SK-N-SH (cell line): ENCODE measurements at regions of chr1 and their contacts with region 1.

Region 1: GRCh38 chr1:224513787-224514209 is 79.2 kb upstream of the WDR26 start:
- DNase-seq: peak; percentile 89
- H3K4me3 ChIP-seq: peak overlapping the region in 1 of 2 experiments; percentile 27; a peak in 1 of 4 replicates
- H3K27ac ChIP-seq: no peak overlapping the region
- H3K4me1 ChIP-seq: peaks cover 0 to 3% of the 10 kb centered on the region in 2 experiments; a peak in 2 of 4 replicates
- H3K27me3 ChIP-seq: no peaks in the 10 kb centered on the region
- CTCF ChIP-seq: peak; percentile 92
- EP300 ChIP-seq: no peak
- RAD21 ChIP-seq: peak; percentile 97

Region 2: DNA sequence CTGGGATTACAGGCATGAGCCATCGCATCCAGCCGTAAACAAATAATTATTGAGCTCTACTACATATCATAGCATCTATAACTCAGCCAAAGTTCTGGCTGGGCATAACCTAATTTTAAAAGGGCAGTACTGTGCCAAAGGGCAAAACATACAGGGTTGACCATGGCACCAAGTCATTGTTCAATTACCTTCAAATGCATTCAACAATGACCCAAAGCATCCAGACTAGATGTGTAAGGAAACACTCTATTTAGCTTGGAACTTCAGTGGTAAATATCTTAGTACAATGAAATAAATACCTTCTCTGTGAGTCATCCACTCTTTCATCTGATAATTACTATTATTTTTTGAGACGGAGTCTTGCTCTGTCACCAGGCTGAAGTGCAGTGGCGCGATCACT is 253.9 kb before region 1 on chr1:
- CTCF ChIA-PET with region 1: no interaction called
- POLR2A ChIA-PET with region 1: no interaction called
- DNase-seq: no peak
- H3K4me3 ChIP-seq: no peak overlapping the region
- H3K27ac ChIP-seq: no peak overlapping the region
- H3K4me1 ChIP-seq: no peaks in the 10 kb centered on the region
- H3K27me3 ChIP-seq: no peaks in the 10 kb centered on the region
- CTCF ChIP-seq: no peak
- EP300 ChIP-seq: no peak
- RAD21 ChIP-seq: no peak

Region 3: DNA sequence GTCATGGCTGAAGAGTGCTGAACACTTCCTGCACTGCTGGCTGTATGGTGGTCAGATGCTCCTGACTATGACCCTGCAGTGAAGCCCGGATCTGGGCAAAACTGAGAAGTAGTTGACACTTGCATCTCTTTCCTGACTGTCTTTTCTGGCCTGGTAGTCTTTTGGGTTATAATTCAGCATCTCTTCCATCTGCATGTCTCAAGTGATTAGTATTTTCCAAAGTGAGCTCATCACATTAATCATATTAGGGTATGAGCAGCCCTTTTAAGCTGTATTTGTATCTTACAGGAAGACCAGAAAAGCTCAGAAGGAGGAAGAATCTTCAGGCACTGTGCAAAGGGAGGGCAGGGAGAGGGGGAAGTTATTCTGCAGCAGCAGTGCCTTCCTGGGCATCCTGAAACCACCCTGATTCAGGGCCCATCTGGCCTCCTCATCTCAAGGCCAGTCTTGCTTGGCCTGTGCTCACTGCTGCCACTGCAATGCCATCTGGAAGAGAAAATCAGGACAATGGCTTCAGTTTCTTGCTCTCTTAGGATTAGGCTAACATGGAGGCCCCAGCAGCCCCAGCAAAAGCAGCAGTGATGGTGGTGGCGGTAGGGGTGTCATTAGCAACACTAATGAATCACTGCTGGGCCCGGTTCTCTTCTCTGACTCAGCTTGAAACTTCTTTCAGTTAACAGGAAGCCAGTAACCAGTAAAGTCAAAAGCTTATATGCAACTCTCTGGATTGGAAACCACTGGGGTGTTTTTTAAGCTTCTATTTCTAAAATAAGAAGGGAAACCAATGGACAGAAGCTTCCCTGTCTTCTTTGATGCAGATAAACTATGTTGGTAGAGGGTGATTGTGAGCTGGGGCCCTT is 15.9 kb before region 1 on chr1:
- CTCF ChIA-PET with region 1: interaction called, 33 read pairs
- POLR2A ChIA-PET with region 1: interaction called, 3 read pairs
- DNase-seq: no peak
- H3K4me3 ChIP-seq: peak overlapping the region in 1 of 2 experiments; percentile 0; a peak in 1 of 4 replicates
- H3K27ac ChIP-seq: peak overlapping the region; percentile 81 to 93
- H3K4me1 ChIP-seq: peaks cover 35 to 39% of the 10 kb centered on the region in 2 experiments
- H3K27me3 ChIP-seq: no peaks in the 10 kb centered on the region
- CTCF ChIP-seq: no peak
- EP300 ChIP-seq: 0 out of 4 replicates have a peak, but pooled peaks of 1 of the 2 experiments have one; percentile 39
- RAD21 ChIP-seq: no peak

Region 4: DNA sequence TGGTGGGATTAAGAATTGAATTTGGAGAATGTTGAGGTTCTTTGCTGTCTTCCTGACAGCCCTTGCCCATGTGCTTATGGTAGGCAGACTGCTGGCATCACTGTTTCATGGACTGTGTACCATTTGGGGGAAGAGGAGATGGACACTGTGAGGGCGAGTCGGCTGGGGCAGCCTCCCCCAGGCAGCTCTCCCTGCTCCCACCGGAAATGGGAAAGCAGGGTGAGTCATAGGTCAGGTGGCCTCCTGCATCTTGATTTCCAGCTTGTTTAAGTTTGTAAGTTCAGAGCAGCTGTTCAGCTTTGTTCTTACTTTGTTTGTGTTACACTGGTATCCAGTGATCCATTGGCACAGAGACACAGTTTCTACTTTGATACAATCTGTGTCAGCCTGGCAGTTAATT is 15.1 kb after region 1 on chr1:
- CTCF ChIA-PET with region 1: interaction called, 46 read pairs
- POLR2A ChIA-PET with region 1: no interaction called
- DNase-seq: no peak
- H3K4me3 ChIP-seq: no peak overlapping the region
- H3K27ac ChIP-seq: peak overlapping the region; percentile 48 to 71; a peak in 3 of 4 replicates
- H3K4me1 ChIP-seq: peaks cover 8 to 22% of the 10 kb centered on the region in 2 experiments
- H3K27me3 ChIP-seq: no peaks in the 10 kb centered on the region
- CTCF ChIP-seq: no peak
- EP300 ChIP-seq: peak in 1 of 2 experiments; percentile 58; a peak in 1 of 4 replicates
- RAD21 ChIP-seq: no peak

Region 5: DNA sequence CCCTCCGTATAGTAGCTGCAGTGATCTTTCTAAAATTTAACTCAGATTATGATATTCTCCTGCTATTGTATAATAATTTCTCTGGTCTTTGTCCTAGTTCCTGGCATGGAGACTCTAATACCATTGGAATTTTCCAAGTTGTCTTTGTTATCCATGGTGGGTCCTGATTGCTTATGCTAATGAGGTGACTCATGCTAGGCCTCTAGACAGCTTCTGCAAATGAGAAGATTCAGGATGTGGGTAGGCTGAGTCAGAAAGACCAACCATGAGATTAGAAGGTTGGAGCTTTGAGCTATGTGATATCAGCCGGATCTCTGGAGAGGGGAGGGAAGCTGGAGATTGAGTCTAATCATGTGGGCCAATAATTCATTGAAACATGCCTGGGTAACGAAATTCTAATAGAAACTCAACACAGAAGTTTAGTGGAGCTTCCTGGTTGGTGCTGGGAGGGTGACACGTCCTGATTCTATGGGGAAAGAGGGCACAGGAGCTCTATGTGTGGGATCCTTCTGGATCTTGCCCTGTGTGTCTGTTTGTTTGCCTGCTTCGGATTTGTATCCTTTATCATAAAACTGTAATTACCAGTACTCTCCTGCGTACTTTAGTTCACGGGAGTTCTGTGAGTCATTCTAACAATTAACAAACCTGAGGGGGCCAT is 29.1 kb after region 1 on chr1:
- CTCF ChIA-PET with region 1: interaction called, 16 read pairs
- POLR2A ChIA-PET with region 1: no interaction called
- DNase-seq: no peak
- H3K4me3 ChIP-seq: peak overlapping the region in 1 of 2 experiments; percentile 7; a peak in 2 of 4 replicates
- H3K27ac ChIP-seq: peak overlapping the region; percentile 94 to 99
- H3K4me1 ChIP-seq: peaks cover 33 to 47% of the 10 kb centered on the region in 2 experiments
- H3K27me3 ChIP-seq: no peaks in the 10 kb centered on the region
- CTCF ChIP-seq: no peak
- EP300 ChIP-seq: peak; percentile 59 to 99
- RAD21 ChIP-seq: no peak

Region 6: GRCh38 chr1:224873434-224874369 is 359.9 kb after region 1 on chr1:
- CTCF ChIA-PET with region 1: interaction called, 12 read pairs
- POLR2A ChIA-PET with region 1: no interaction called
- DNase-seq: no peak
- H3K4me3 ChIP-seq: no peak overlapping the region
- H3K27ac ChIP-seq: no peak overlapping the region
- H3K4me1 ChIP-seq: peaks cover 3 to 6% of the 10 kb centered on the region in 2 experiments; a peak in 3 of 4 replicates
- H3K27me3 ChIP-seq: no peaks in the 10 kb centered on the region
- CTCF ChIP-seq: no peak
- EP300 ChIP-seq: no peak
- RAD21 ChIP-seq: no peak